ENCODE measurements at regions of chr3 and their contacts with region 1.

Region 1: GRCh38 chr3:10248184-10249080 is at the start of gene TATDN2:
- DNase-seq: peak; percentile 95
- ATAC-seq: peak; percentile 96
- H3K4me3 ChIP-seq: peak within 1 kb of the TSS; percentile 97
- H3K27ac ChIP-seq: peak within 1 kb of the TSS; percentile 81
- H3K4me1 ChIP-seq: peaks cover 6% of the 10 kb centered on the region; the same call in 1 of the 2 replicates
- H3K27me3 ChIP-seq: no peaks in the 10 kb centered on the region
- CTCF ChIP-seq: no peak
- EP300 ChIP-seq: no peak
- POLR2A ChIP-seq: peak; percentile 85
- RAD21 ChIP-seq: no peak
- polyA plus RNA-seq, gene TATDN2: 5.7 to 9.1 TPM

Region 2: DNA sequence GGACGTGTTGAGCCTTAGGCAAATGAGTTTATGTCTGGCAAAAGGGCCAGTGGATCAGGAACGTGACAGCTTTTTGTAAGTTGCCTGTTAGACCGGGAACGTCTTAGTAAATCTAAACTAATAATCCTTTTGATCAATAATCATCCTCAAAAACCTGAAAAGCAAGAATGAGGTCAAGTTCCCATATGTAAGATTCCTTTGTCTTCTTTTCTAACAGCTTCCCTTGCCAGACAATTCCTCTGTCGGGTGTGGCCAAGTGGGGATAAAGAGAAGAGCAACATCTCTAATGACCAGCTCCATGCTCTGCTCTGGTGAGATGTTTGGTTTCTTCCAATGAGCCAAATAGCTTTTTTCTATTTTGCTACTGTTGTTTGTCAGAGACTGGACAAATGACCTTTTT is 160.2 kb before region 1 on chr3:
- CTCF ChIA-PET with region 1: no interaction called
- POLR2A ChIA-PET with region 1: no interaction called
- RAD21 ChIA-PET with region 1: no interaction called
- SMC1A ChIA-PET with region 1: no interaction called
- in situ Hi-C with region 1: no loop called
- intact Hi-C with region 1: no loop called
- DNase-seq: no peak
- ATAC-seq: no peak
- H3K4me3 ChIP-seq: no peak overlapping the region
- H3K27ac ChIP-seq: no peak overlapping the region
- H3K4me1 ChIP-seq: no peaks in the 10 kb centered on the region
- H3K27me3 ChIP-seq: no peaks in the 10 kb centered on the region
- CTCF ChIP-seq: no peak
- EP300 ChIP-seq: no peak
- POLR2A ChIP-seq: no peak
- RAD21 ChIP-seq: no peak

Region 3: GRCh38 chr3:10198761-10199649 is 49.4 kb before region 1 on chr3:
- CTCF ChIA-PET with region 1: no interaction called
- POLR2A ChIA-PET with region 1: interaction called, 11 read pairs
- RAD21 ChIA-PET with region 1: interaction called, 4 read pairs
- SMC1A ChIA-PET with region 1: no interaction called
- in situ Hi-C with region 1: no loop called
- intact Hi-C with region 1: loop called (anchors 1 kb)
- DNase-seq: peak; percentile 80
- ATAC-seq: peak; percentile 87
- H3K4me3 ChIP-seq: no peak overlapping the region
- H3K27ac ChIP-seq: peak overlapping the region; percentile 62
- H3K4me1 ChIP-seq: peaks cover 48% of the 10 kb centered on the region
- H3K27me3 ChIP-seq: no peaks in the 10 kb centered on the region
- CTCF ChIP-seq: no peak
- EP300 ChIP-seq: peak in 1 of 2 experiments; percentile 68; a peak in 1 of 4 replicates
- POLR2A ChIP-seq: peak; percentile 17; the same call in 1 of the 2 replicates
- RAD21 ChIP-seq: no peak

Region 4: GRCh38 chr3:10292505-10293419 is 44.3 kb after region 1 on chr3 and contains the start of gene GHRL:
- CTCF ChIA-PET with region 1: interaction called, 3 read pairs
- POLR2A ChIA-PET with region 1: no interaction called
- RAD21 ChIA-PET with region 1: interaction called, 3 read pairs
- SMC1A ChIA-PET with region 1: interaction called, 6 read pairs
- in situ Hi-C with region 1: no loop called
- intact Hi-C with region 1: loop called (anchors 1 kb)
- DNase-seq: peak; percentile 68
- ATAC-seq: peak; percentile 90
- H3K4me3 ChIP-seq: peak within 1 kb of the TSS; percentile 20
- H3K27ac ChIP-seq: peak within 1 kb of the TSS; percentile 66
- H3K4me1 ChIP-seq: peaks cover 5% of the 10 kb centered on the region; the same call in 1 of the 2 replicates
- H3K27me3 ChIP-seq: no peaks in the 10 kb centered on the region
- CTCF ChIP-seq: no peak
- EP300 ChIP-seq: peak; percentile 26 to 50; a peak in 2 of 4 replicates
- POLR2A ChIP-seq: peak; percentile 56
- RAD21 ChIP-seq: no peak
- polyA plus RNA-seq, gene GHRL: 0.35 to 0.58 TPM

Region 5: DNA sequence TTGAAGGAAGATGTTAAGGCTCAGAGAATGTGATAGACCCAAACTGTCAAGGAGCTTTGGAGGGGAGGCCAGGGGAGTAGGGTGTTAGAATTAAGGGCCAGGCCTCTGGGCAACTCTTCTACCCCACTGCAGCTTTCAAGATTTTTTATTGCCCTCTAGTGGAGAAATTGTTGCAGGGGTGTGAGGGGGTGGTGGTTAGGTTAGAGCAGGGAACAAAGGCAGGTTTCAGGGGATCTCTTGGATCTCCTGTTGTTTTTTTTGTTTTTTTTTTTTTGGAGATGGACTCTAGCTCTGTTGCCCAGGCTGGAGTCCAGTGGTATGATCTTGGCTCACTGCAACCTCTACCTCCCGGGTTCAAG is 73.9 kb after region 1 on chr3:
- CTCF ChIA-PET with region 1: no interaction called
- POLR2A ChIA-PET with region 1: interaction called, 9 read pairs
- RAD21 ChIA-PET with region 1: interaction called, 11 read pairs
- SMC1A ChIA-PET with region 1: interaction called, 5 read pairs
- in situ Hi-C with region 1: no loop called
- intact Hi-C with region 1: no loop called
- DNase-seq: no peak
- ATAC-seq: peak; percentile 69
- H3K4me3 ChIP-seq: no peak overlapping the region
- H3K27ac ChIP-seq: no peak overlapping the region
- H3K4me1 ChIP-seq: 0 out of 2 replicates have a peak, but pooled peaks cover 3% of the 10 kb centered on the region
- H3K27me3 ChIP-seq: peaks cover 0 to 3% of the 10 kb centered on the region in 2 experiments; a peak in 1 of 4 replicates
- CTCF ChIP-seq: peak; percentile 57 to 68 (median 62)
- EP300 ChIP-seq: no peak
- POLR2A ChIP-seq: no peak
- RAD21 ChIP-seq: peak; percentile 70

Region 6: DNA sequence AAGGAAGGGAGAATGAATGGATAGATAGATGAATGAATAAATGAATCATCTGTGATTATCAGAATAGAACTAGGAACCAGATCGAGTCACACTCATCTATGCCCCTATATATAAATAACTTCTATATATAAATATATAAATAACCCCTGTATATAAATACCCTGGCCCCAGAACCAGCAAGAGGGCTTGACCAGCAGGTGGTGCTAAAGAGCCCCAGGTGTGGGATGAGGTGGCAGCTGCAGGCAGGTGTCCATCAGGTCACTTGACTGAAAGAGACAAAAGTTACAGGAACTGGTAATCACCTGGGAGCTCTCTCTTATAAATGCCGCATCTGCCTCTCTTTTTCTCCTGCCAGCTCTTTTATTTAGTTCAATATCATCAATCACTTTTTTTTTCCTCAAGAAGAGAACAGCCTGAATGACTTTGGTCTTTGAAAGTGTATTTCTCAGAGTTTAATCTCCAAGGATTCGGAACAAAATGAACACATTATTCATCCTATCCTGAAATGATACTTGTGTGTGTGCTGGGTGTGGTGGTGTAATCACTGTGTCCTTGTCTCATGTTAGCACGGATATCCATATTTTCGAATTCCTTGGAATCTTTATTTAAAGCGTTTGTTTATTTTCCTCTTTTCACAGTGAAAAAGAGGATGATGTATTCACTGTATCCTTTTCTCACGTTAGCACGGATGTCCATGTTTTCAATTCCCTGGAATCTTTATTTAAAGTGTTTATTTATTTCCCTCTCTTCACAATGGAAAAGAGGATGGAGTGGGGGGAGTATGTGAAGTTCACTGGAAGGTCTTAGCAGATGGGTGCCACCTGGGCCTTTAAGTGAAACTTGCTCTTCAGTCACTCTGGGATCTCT is 988.4 kb after region 1 on chr3:
- CTCF ChIA-PET with region 1: no interaction called
- POLR2A ChIA-PET with region 1: no interaction called
- RAD21 ChIA-PET with region 1: no interaction called
- SMC1A ChIA-PET with region 1: no interaction called
- in situ Hi-C with region 1: no loop called
- intact Hi-C with region 1: no loop called
- DNase-seq: no peak
- ATAC-seq: peak; percentile 96
- H3K4me3 ChIP-seq: no peak overlapping the region
- H3K27ac ChIP-seq: no peak overlapping the region
- H3K4me1 ChIP-seq: no peaks in the 10 kb centered on the region
- H3K27me3 ChIP-seq: no peaks in the 10 kb centered on the region
- CTCF ChIP-seq: peak; percentile 60 to 85 (median 70)
- EP300 ChIP-seq: no peak
- POLR2A ChIP-seq: no peak
- RAD21 ChIP-seq: peak; percentile 87